Esophagus muscularis mucosa (tissue), 4 donors: ENCODE measurements at regions of chr9 and their contacts with region 1.

Region 1: DNA sequence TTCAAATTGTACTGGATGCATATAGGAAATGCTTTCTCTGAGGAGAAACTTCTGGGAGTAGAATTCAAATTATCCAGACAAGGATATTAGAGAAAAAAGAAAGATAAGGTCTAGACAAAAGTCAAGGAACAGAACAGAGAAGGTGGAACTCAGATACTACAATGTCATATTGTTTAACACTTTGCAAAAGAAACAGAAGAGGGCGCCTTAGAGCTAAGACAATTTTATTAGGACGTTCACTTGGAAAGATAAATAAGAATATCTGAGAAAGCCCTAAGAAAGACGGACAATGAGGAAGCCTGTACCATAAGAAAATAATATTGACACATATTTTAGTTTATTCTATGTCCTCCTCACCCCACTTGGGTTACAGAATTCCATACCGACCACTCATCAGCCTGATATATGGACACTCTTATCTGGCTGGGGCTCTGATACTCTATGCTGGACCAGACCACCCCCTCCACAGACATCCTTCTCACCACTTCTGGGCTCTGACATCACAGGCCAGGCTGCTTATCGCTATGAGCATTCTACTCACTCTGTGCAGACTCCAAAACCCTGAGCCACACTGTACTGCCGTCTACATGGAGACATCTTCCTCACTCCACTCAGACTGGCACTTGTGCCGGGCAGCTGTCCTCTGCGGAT is 9.1 kb upstream of the AK3 start:
- DNase-seq: no peak
- H3K4me3 ChIP-seq: no peak overlapping the region
- H3K27ac ChIP-seq: no peak overlapping the region
- H3K4me1 ChIP-seq: peaks cover 0 to 2% (median 0%) of the 10 kb centered on the region in 4 donors
- H3K27me3 ChIP-seq: no peaks in the 10 kb centered on the region
- CTCF ChIP-seq: peak; percentile 40 to 63 (median 43)
- EP300 ChIP-seq: no peak
- POLR2A ChIP-seq: no peak

Region 2: DNA sequence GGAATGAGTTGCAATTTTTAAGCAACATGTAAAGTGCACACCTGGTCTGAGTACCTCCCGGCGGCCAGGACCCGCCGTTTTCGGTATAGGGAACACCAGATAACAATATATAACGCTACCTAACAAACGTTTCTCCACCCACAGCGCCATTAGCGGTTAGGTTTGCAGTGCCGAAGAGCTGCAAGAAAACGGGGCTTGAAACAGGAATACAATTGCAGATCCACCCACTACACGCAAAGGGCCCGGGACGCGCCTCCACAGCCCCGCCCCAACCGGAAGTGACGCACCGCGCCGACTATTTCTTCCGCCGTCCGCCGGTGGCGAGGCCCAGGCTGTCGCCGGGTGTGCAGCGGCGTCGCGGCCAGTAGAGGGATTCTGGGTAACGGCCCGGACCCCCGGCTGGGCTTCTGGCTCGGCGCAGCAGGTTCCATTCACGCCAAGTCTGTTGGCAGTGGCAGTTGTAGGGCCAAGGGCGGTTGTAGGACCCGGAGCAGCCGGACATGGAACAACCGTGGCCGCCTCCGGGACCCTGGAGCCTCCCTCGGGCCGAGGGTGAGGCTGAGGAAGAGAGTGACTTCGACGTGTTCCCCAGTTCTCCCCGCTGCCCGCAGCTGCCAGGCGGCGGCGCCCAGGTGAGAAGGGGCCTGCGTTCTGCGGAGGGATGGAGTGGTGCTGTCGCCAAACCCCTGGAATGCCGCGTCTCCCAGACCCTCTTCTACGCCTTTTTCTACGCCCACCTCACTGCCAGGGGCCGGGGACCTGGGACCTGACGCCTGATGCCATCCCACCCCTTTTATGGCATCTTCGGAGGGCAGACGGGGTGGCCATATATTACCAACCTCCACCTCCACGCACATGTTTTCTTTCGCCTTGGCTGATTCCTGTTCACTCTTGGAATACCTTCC is 70.6 kb before region 1 on chr9 and contains the start of gene CDC37L1:
- intact Hi-C with region 1: no loop called
- DNase-seq: peak; percentile 99
- H3K4me3 ChIP-seq: peak within 1 kb of the TSS; percentile 80 to 97 (median 90)
- H3K27ac ChIP-seq: peak within 1 kb of the TSS; percentile 93 to 100 (median 98)
- H3K4me1 ChIP-seq: peaks cover 10 to 50% (median 41%) of the 10 kb centered on the region in 4 donors
- H3K27me3 ChIP-seq: no peaks in the 10 kb centered on the region
- CTCF ChIP-seq: peak; percentile 30 to 80 (median 66)
- EP300 ChIP-seq: no peak
- POLR2A ChIP-seq: peak; percentile 88
- total RNA-seq, gene CDC37L1: 78.3 to 115 (median 86.4) TPM

Region 3: GRCh38 chr9:5425006-5425628 is 675.0 kb after region 1 on chr9:
- intact Hi-C with region 1: loop called (anchors 10 kb)
- DNase-seq: no peak
- H3K4me3 ChIP-seq: no peak overlapping the region
- H3K27ac ChIP-seq: no peak overlapping the region
- H3K4me1 ChIP-seq: no peaks in the 10 kb centered on the region
- H3K27me3 ChIP-seq: no peaks in the 10 kb centered on the region
- CTCF ChIP-seq: peak in 2 of 3 experiments; percentile 16 to 38
- EP300 ChIP-seq: no peak
- POLR2A ChIP-seq: no peak